Activated CD8-positive, alpha-beta T cell treated with anti-CD3 and anti-CD28 coated beads, Interleukin-2, amount 10 ng/mL, durations not matched to agents 7 days and 5 days (primary cell): ENCODE measurements at regions of chr7 and their contacts with region 1.

Region 1: DNA sequence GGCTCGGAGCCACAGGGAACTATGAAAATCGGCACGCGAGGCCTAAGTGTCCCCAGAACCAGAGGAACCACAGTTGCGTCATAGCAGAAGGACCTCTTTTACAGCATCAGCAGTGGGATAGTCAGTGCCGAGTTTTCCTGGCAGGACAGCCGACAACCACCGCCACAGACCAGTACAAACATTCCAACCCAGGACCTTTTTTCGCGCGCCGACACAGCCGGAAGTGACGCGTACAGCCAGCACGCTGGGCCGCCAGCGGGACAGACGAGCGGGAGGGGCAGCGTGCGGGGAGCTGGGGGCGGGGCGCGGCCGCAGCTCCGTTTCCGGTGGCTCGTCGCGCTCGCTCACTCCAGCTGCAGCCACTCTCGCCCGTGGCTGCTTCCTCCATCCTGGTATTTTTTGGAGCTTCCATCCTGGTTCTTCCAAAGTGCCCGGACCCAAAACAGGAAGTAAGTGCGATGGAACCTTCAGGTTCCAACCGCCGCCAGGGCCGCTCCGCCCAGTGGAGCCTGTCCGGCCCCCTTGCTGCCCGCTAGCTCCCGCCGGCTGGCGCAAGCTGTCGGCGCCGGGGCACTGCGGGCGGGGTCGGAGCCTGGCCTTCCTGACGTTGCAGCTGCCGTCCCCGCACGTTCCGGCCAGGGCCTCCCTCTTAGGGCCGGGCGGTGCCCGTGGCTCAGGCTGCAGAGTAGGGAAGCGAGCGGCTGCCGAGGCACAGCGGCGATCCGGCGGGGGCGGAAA is at the start of gene DMTF1:
- DNase-seq: peak; percentile 89
- ATAC-seq: peak; percentile 83
- H3K4me3 Mint-ChIP-seq: peak within 1 kb of the TSS; percentile 94
- H3K27ac Mint-ChIP-seq: peak within 1 kb of the TSS; percentile 97
- H3K4me1 Mint-ChIP-seq: peaks cover 43% of the 10 kb centered on the region
- H3K27me3 Mint-ChIP-seq: peaks cover 2% of the 10 kb centered on the region
- total RNA-seq, gene DMTF1: 94.7 to 96.8 TPM

Region 2: DNA sequence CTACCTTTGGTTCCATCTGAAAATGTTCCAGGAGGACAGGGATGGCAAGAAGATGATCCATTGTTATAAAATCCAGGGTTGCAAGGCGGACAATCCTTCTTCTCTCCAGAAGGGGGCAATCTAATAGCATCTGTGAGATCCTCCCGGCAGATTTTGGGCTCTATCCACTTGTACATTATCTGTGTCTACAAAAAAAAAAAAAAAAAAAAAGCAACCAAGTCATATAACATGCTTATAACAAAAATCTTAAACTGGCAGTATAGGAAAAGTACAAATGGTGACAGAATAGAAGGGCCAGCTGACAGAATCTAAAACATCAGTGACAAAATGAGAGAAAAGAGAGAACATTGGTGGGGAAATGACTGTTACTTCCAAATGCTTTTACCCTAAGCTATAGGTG is 225.5 kb before region 1 on chr7:
- CTCF ChIA-PET with region 1: interaction called, 87 read pairs
- POLR2A ChIA-PET with region 1: no interaction called
- DNase-seq: peak; percentile 37
- ATAC-seq: no peak
- H3K4me3 Mint-ChIP-seq: no peak overlapping the region
- H3K27ac Mint-ChIP-seq: no peak overlapping the region
- H3K4me1 Mint-ChIP-seq: no peaks in the 10 kb centered on the region
- H3K27me3 Mint-ChIP-seq: peaks cover 13% of the 10 kb centered on the region

Region 3: GRCh38 chr7:86947956-86948355 is 204.3 kb before region 1 on chr7:
- CTCF ChIA-PET with region 1: interaction called, 43 read pairs
- POLR2A ChIA-PET with region 1: interaction called, 4 read pairs
- DNase-seq: no peak
- ATAC-seq: no peak
- H3K4me3 Mint-ChIP-seq: no peak overlapping the region
- H3K27ac Mint-ChIP-seq: no peak overlapping the region
- H3K4me1 Mint-ChIP-seq: no peaks in the 10 kb centered on the region
- H3K27me3 Mint-ChIP-seq: peaks cover 7% of the 10 kb centered on the region

Region 4: DNA sequence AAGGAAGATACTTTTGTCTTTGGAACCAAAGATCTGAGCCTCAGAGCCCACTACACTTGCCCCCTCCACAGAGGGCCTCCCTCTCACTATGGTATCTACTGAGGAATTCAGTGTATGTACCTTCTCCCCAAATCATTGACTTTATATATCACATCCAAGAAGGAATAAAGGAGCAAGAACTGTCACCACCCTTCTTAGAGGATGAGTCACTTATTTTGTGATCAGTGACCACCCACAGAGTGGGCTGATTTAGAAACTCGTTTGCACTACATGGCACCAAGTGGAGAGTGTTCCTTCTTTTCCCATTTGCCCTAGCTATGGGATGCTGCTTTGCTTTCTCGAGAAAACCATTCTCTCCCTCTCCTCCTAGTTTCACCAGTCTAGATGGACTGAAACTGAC is 61.5 kb after region 1 on chr7:
- CTCF ChIA-PET with region 1: interaction called, 37 read pairs
- POLR2A ChIA-PET with region 1: interaction called, 146 read pairs
- DNase-seq: no peak
- ATAC-seq: no peak
- H3K4me3 Mint-ChIP-seq: peak overlapping the region; percentile 10
- H3K27ac Mint-ChIP-seq: peak overlapping the region; percentile 94
- H3K4me1 Mint-ChIP-seq: peaks cover 75% of the 10 kb centered on the region
- H3K27me3 Mint-ChIP-seq: no peaks in the 10 kb centered on the region